ENCODE measurements at regions of chr3 and their contacts with region 1.

Region 1: GRCh38 chr3:12578742-12579141 is 21.9 kb downstream of the MKRN2 start:
- DNase-seq: no peak
- H3K4me3 ChIP-seq: no peak overlapping the region
- H3K27ac ChIP-seq: no peak overlapping the region
- H3K4me1 ChIP-seq: no peaks in the 10 kb centered on the region
- H3K27me3 ChIP-seq: no peaks in the 10 kb centered on the region
- CTCF ChIP-seq: peak; percentile 36

Region 2: DNA sequence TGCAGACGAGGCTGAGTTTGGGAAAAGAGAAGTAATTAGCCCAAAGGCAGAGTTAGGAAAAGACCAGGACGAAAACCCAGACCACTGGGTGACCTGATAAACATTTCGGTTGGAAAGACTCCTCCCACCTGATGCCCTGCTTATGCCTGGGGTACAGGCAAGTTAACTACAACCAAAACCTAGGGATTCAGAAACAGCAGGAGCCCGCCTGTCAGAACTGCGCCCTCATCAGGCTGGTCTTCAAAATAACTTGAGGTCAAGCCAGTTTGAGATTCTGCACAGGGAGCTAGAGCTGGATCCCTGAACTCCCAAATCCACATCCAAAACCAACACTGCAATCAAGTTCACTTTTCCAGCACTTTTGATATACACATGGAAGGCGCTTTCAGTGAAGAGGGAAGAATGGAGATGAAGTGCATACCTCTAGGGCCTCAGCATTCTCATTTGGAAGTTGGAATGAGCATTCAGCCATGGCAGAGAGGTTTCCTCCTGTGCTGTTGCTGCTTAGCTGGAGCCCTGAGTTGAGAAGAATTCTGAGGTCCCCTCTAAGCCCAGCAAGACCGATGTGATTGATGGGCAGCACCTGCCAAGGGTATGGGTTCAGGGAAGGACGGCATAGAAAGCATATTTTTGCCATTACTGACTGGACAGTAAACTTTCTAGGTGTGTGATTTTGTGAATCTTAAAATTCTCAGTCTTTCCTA is 82.8 kb before region 1 on chr3:
- CTCF ChIA-PET with region 1: interaction called, 10 read pairs
- POLR2A ChIA-PET with region 1: no interaction called
- intact Hi-C with region 1: no loop called
- DNase-seq: peak; percentile 15
- H3K4me3 ChIP-seq: no peak overlapping the region
- H3K27ac ChIP-seq: no peak overlapping the region
- H3K4me1 ChIP-seq: no peaks in the 10 kb centered on the region
- H3K27me3 ChIP-seq: no peaks in the 10 kb centered on the region
- CTCF ChIP-seq: peak; percentile 33; the same call in 1 of the 2 replicates

Measured in A673 (cell line).